ENCODE measurements at regions of chr17 and their contacts with region 1.

Region 1: DNA sequence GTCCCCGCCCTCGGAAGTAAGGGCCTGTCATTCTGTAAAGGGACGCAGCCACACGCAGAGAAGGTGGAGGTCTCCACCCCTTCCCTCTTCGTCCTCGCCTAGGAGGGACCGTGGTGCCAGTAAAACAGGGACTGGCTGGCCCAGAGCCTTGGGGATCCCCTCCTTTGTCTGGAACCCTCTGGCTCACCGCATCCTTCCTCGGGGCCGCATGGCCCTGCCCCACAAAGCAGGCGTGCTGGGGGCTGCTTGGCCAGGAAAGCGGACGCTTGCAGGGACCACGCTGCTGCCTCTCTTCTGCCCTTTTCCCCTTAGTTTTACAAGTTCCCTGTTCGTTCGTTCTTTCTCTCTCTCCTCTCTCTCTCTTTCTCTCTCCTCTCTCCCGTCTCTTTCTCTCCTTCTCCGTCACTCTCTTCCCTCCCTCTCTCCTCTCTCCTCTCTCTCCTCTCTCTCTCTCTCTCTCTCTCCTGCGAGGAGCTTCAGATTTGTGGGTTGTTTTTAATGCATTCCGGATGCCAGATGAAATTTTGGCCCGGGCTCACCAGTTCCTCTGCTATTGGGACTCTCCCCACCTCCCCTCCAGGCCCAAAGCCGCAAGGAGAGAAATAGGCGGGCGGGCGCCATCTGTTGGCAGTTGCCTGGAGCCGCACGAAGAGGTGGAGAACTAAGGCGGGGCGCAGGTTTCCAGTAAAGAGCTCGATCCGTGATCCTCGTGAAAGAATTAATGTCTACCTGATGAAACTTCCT is 35.1 kb upstream of the CDRT4 start:
- DNase-seq: peak; percentile 57
- ATAC-seq: peak; percentile 93
- H3K4me3 Mint-ChIP-seq: peak overlapping the region; percentile 72
- H3K27ac Mint-ChIP-seq: no peak overlapping the region
- H3K4me1 Mint-ChIP-seq: peaks cover 14% of the 10 kb centered on the region
- H3K27me3 Mint-ChIP-seq: no peaks in the 10 kb centered on the region
- CTCF ChIP-seq: no peak

Region 2: GRCh38 chr17:15257258-15257788 is 245.2 kb before region 1 on chr17:
- CTCF ChIA-PET with region 1: interaction called, 11 read pairs
- POLR2A ChIA-PET with region 1: no interaction called
- intact Hi-C with region 1: loop called (anchors 1 kb)
- DNase-seq: peak; percentile 32
- ATAC-seq: peak; percentile 45
- H3K4me3 Mint-ChIP-seq: no peak overlapping the region
- H3K27ac Mint-ChIP-seq: no peak overlapping the region
- H3K4me1 Mint-ChIP-seq: peaks cover 14% of the 10 kb centered on the region
- H3K27me3 Mint-ChIP-seq: peaks cover 63% of the 10 kb centered on the region
- CTCF ChIP-seq: peak; percentile 76

Region 3: GRCh38 chr17:15469260-15469659 is 33.3 kb before region 1 on chr17:
- CTCF ChIA-PET with region 1: no interaction called
- POLR2A ChIA-PET with region 1: no interaction called
- intact Hi-C with region 1: no loop called
- DNase-seq: no peak
- ATAC-seq: no peak
- H3K4me3 Mint-ChIP-seq: no peak overlapping the region
- H3K27ac Mint-ChIP-seq: no peak overlapping the region
- H3K4me1 Mint-ChIP-seq: no peaks in the 10 kb centered on the region
- H3K27me3 Mint-ChIP-seq: no peaks in the 10 kb centered on the region
- CTCF ChIP-seq: no peak